ENCODE measurements at regions of chr4 and their contacts with region 1.

Region 1: DNA sequence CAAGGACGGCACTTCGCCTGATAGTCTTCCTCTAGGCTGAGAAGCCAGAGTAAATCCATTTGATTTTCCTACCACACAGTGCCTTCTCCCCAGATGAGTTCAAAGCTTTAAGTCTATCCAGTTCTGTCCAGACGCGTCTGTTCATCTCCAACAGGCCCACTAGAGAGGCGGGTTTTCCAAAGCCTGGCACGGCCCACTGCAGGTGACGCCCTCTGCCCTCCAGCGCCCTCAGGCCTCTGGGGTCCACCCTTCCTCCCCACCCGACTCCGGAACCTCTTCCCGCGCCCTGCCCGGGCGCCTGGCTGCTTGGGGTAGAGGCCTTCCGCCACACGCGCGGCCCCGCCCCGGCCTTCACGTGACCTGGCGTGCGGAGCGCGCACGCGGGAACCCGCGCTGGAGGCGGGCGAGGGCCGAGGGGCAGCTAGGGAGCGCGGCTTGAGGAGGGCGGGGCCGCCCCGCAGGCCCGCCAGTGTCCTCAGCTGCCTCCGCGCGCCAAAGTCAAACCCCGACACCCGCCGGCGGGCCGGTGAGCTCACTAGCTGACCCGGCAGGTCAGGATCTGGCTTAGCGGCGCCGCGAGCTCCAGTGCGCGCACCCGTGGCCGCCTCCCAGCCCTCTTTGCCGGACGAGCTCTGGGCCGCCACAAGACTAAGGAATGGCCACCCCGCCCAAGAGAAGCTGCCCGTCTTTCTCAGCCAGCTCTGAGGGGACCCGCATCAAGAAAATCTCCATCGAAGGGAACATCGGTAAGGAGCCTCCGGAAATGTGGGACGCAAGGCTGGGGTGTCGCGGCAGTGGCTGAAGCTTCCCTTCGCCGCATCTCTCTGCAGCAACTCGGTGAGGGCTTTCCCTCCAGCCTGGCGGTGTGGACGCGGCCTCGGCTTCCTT is at the start of gene DCK:
- DNase-seq: peak; percentile 92
- H3K4me3 ChIP-seq: peak within 1 kb of the TSS; percentile 91 to 92 (median 91)
- H3K27ac ChIP-seq: peak within 1 kb of the TSS; percentile 65
- H3K4me1 ChIP-seq: peaks cover 14% of the 10 kb centered on the region
- H3K27me3 ChIP-seq: no peaks in the 10 kb centered on the region
- CTCF ChIP-seq: no peak
- POLR2A ChIP-seq: peak; percentile 73
- total RNA-seq, gene DCK: 18.0 and 19.9 TPM in 2 replicates

Region 2: DNA sequence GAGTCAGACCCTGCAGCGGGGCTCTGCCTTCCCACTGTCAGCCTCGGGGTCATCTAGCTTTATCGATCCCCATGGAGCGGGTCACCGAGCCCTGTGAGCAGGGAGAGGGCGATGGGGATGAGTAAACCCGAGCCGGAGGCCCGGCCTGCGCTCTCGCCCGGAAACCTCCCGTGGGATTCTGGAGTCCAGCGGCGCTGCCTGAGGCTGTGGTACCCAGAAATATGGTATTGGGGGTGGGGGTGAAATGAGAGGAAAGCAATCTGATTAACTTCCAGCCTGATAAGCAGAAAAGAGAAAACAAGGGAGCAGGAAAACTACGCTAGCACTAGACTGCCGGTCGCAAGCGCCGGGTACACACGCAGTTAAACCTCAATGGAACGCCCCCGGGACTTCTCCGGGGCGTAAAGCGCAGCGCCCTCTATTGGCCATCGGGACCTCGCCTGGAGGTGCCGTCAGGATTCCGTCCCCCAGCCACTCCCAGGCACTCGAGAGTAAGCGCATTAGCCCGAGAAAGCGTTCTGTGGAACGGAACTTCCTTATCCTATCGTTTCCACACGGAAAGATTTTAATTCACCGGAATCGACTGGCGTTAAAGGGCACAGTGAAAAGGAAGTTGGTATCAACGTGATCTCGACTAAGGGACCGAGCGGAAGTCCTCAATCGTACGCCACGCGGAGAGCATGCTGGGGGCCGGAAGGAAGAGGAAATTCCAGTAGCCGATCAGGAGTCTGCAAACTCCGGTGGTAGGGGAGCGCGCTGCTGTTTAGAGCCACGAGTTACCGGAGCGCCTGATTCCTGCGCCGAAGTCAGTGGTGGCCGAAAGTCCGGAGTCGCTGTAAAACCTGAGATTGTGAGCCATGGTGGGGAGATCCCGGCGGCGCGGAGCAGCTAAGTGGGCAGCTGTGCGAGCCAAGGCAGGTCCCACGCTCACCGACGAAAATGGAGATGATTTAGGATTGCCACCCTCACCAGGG is 305.3 kb before region 1 on chr4 and contains the start of gene UTP3:
- CTCF ChIA-PET with region 1: no interaction called
- POLR2A ChIA-PET with region 1: no interaction called
- dilution Hi-C with region 1: no loop called
- intact Hi-C with region 1: loop called (anchors 1 kb)
- DNase-seq: peak; percentile 98
- H3K4me3 ChIP-seq: peak within 1 kb of the TSS; percentile 34 to 72 (median 62)
- H3K27ac ChIP-seq: peak within 1 kb of the TSS; percentile 36
- H3K4me1 ChIP-seq: peaks cover 22% of the 10 kb centered on the region
- H3K27me3 ChIP-seq: no peaks in the 10 kb centered on the region
- CTCF ChIP-seq: peak; percentile 96 to 99
- POLR2A ChIP-seq: peak; percentile 83
- total RNA-seq, gene UTP3: 32.8 and 34.7 TPM in 2 replicates

Region 3: GRCh38 chr4:70839589-70840093 is 153.8 kb before region 1 on chr4 and contains the start of gene GRSF1:
- CTCF ChIA-PET with region 1: no interaction called
- POLR2A ChIA-PET with region 1: no interaction called
- dilution Hi-C with region 1: no loop called
- intact Hi-C with region 1: loop called (anchors 1 kb)
- DNase-seq: peak; percentile 91
- H3K4me3 ChIP-seq: peak within 1 kb of the TSS; percentile 54 to 81 (median 80)
- H3K27ac ChIP-seq: peak within 1 kb of the TSS; percentile 60
- H3K4me1 ChIP-seq: peaks cover 2% of the 10 kb centered on the region
- H3K27me3 ChIP-seq: no peaks in the 10 kb centered on the region
- CTCF ChIP-seq: no peak
- POLR2A ChIP-seq: peak; percentile 87
- total RNA-seq, gene GRSF1: 70.7 and 71.6 TPM in 2 replicates

Region 4: GRCh38 chr4:70901984-70902576 is 91.3 kb before region 1 on chr4 and contains the start of gene MOB1B:
- CTCF ChIA-PET with region 1: no interaction called
- POLR2A ChIA-PET with region 1: interaction called, 5 read pairs
- dilution Hi-C with region 1: no loop called
- intact Hi-C with region 1: loop called (anchors 2 kb)
- DNase-seq: peak; percentile 88
- H3K4me3 ChIP-seq: peak within 1 kb of the TSS; percentile 64 to 99 (median 96)
- H3K27ac ChIP-seq: peak within 1 kb of the TSS; percentile 71
- H3K4me1 ChIP-seq: peaks cover 14% of the 10 kb centered on the region
- H3K27me3 ChIP-seq: no peaks in the 10 kb centered on the region
- CTCF ChIP-seq: peak in 1 of 2 donors; percentile 24
- POLR2A ChIP-seq: peak; percentile 83
- total RNA-seq, gene MOB1B: 23.9 and 25.9 TPM in 2 replicates

Region 5: DNA sequence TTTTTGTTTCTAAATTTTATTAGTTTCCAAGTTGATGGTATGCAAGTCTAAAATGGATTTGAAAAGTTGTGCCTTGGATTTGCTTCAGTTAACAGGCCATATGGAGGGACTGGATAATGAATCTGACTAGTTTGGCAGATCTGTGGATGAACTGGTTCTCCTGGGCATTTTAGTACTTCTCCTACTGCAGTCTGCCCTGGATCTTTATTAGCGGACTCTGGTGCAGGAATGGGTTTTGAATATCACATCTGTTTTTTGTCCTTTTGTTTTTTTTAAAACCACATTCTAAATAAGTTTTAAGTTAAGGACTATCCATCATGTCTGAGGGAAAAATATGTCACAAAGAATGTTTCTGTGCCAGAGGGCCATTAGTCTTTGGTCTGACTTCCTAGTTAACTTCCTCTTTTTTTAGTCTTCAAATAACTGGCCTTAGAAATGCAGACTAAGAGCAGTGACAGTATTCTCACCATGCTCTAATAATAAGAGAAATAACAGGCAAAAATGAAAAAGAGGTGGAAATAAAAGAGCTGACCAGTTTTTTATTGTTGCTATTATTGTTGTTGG is 13.9 kb before region 1 on chr4:
- CTCF ChIA-PET with region 1: no interaction called
- POLR2A ChIA-PET with region 1: no interaction called
- dilution Hi-C with region 1: no loop called
- intact Hi-C with region 1: no loop called
- DNase-seq: peak; percentile 53
- H3K4me3 ChIP-seq: no peak overlapping the region
- H3K27ac ChIP-seq: no peak overlapping the region
- H3K4me1 ChIP-seq: peaks cover 14% of the 10 kb centered on the region
- H3K27me3 ChIP-seq: no peaks in the 10 kb centered on the region
- CTCF ChIP-seq: no peak
- POLR2A ChIP-seq: no peak

Measured in endothelial cell of umbilical vein (primary cell).